ENCODE measurements at regions of chr10 and their contacts with region 1.

Region 1: GRCh38 chr10:22714479-22715289 is at the start of gene PIP4K2A:
- DNase-seq: peak; percentile 71 to 83
- ATAC-seq: peak; percentile 74 to 94 (median 86)
- H3K4me3 ChIP-seq: peak within 1 kb of the TSS; percentile 80 to 99 (median 94)
- H3K27ac ChIP-seq: peak within 1 kb of the TSS; percentile 77 to 95 (median 84)
- H3K4me1 ChIP-seq: peaks cover 0 to 37% (median 25%) of the 10 kb centered on the region in 9 donors
- H3K27me3 ChIP-seq: no peaks in the 10 kb centered on the region
- CTCF ChIP-seq: peak in 1 of 9 donors; percentile 7
- total RNA-seq, gene PIP4K2A: 8.8 to 29.1 (median 14.3) TPM

Region 2: DNA sequence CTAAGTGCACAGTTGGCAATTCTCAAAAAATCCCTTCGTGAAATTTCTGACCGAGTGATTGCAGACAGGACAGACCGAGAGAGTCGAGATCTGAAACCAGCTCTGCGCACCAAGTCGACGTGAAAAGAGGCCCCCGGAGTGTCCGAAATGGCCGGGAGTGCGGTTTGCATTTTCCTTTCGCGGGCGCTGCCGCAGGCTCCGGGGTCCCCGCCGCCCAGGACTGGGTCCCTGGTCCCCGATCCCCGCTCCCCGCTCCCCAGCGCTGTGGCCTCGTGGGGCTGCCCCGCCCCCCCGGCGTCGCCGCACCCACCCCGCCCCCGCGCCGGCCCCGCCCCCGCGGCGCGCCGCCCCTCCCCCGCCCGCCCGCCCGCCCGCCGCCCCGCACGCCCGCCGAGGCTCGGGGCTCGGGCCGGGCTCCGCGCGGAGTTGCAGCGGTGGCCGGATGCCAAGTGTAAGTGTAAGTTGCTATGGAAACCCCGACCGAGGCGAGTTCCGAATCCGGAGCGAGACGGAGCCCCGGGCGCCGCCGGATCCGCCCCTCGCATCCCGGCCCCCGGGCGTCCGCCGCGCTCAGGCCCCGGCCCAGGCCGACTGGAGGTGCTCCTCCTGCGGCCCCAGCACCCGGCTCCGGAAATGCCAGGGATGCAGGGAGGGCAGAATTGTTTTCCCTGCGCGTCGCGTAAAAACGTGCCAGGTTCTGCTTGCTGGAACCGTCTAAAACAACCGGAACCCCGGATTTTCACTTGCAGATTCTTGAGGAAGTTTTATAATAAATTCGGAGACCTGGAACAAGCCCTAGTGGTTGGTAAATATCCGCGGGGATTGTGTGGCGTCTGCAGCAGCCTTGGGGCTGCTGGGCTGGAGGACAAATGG is 389.2 kb before region 1 on chr10:
- intact Hi-C with region 1: loop called in 1 of 10 experiments (anchors 10 kb)
- DNase-seq: peak; percentile 77 to 80
- ATAC-seq: peak; percentile 32 to 66 (median 52)
- H3K4me3 ChIP-seq: peak overlapping the region; percentile 29 to 72 (median 64)
- H3K27ac ChIP-seq: peak overlapping the region in 9 of 10 donors; percentile 45 to 78 (median 59)
- H3K4me1 ChIP-seq: peaks cover 3 to 41% (median 35%) of the 10 kb centered on the region in 9 donors
- H3K27me3 ChIP-seq: peaks cover 0 to 33% (median 5%) of the 10 kb centered on the region in 7 donors
- CTCF ChIP-seq: peak in 2 of 9 donors; percentile 9 to 11

Region 3: DNA sequence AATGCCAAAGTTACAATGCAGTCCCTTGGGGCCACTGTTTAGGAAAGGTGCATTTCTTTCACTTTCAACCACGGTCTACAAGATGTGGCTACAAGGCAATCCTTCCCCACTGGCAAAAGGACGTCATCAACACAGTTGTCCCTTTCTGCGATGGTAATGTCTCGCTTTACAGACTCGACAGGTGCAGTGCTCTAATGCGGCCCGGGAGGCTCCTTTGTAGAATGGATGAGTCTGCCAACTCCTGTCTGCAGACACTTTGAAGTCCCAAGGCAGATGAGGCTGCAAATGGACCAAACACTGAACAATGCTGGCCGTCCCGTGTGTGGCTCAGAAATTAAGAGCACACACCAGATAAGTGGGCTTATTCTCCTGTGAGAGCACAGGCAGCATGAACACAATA is 134.0 kb before region 1 on chr10:
- intact Hi-C with region 1: loop called in 2 of 10 experiments (anchors 10 kb)
- DNase-seq: no peak
- ATAC-seq: no peak
- H3K4me3 ChIP-seq: no peak overlapping the region
- H3K27ac ChIP-seq: peak overlapping the region in 1 of 10 donors; percentile 39
- H3K4me1 ChIP-seq: peaks cover 0 to 4% (median 0%) of the 10 kb centered on the region in 9 donors
- H3K27me3 ChIP-seq: no peaks in the 10 kb centered on the region
- CTCF ChIP-seq: no peak

Region 4: GRCh38 chr10:22615819-22616499 is 98.7 kb before region 1 on chr10:
- intact Hi-C with region 1: loop called in 4 of 10 experiments (anchors 5 to 10 kb)
- DNase-seq: peak in 1 of 2 donors; percentile 38
- ATAC-seq: peak; percentile 25 to 60 (median 48)
- H3K4me3 ChIP-seq: peak overlapping the region in 1 of 10 donors; percentile 32
- H3K27ac ChIP-seq: peak overlapping the region in 8 of 10 donors; percentile 17 to 83 (median 59)
- H3K4me1 ChIP-seq: peaks cover 7 to 93% (median 54%) of the 10 kb centered on the region in 9 donors
- H3K27me3 ChIP-seq: no peaks in the 10 kb centered on the region
- CTCF ChIP-seq: no peak

Region 5: DNA sequence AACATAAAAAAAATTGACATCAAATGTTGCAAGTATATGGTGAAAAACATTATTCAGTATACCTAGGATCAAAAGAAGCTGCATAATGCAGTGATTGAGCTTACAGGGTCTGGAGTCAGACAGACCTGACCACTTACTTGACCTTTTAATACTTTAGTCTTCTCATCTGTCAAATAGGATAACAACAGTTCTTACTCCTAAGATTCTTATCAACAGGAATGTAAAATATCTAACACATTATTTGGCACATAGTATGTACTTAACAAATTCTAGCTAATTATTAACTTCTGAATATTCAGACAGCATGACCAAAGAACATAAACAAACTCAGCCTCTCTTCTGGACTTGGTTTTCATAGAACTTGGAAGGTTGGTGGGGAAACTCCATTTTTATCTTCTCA is 45.3 kb after region 1 on chr10:
- intact Hi-C with region 1: loop called in 1 of 10 experiments (anchors 1 kb)
- DNase-seq: no peak
- ATAC-seq: no peak
- H3K4me3 ChIP-seq: no peak overlapping the region
- H3K27ac ChIP-seq: no peak overlapping the region
- H3K4me1 ChIP-seq: peaks cover 0 to 7% (median 0%) of the 10 kb centered on the region in 9 donors
- H3K27me3 ChIP-seq: no peaks in the 10 kb centered on the region
- CTCF ChIP-seq: no peak

Region 6: DNA sequence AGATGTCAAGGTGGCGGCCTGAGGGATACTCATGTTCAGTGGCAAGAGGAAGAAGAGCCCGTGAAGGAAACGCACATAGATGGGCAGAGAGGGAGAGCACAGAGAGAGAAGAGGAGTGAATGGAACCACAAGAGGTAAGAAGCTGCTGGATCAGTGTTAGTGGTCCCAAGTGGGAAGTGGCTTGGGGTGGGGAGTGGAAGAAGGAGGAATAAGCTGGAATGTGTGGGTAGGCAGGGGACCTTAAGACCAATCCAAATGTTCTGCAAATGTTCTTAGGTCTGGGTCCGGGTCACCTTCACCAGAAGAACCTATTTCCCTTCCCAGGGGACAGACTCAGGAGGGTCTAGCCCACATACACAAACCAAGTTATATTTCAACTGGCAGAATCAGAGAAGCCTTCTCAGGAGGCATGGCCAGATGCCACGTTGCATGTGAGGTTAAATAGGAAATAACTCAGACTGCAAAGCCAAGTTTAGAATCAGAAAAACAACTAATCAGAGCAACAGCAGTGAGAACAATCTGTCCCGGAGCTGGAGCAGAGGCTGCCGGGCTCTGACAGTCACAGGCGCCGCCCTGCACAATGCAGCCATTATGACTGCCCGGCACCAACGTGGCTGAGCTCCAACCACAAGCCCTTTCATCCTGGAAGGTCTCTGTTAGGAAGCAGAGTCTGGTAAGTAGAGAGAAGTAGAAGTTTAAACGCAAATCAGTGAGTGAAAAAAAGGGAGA is 134.6 kb after region 1 on chr10:
- intact Hi-C with region 1: loop called in 2 of 10 experiments (anchors 5 to 10 kb)
- DNase-seq: peak; percentile 65 to 84
- ATAC-seq: peak; percentile 90 to 99 (median 97)
- H3K4me3 ChIP-seq: peak overlapping the region in 7 of 10 donors; percentile 6 to 34 (median 20)
- H3K27ac ChIP-seq: peak overlapping the region; percentile 52 to 85 (median 75)
- H3K4me1 ChIP-seq: peaks cover 6 to 27% (median 20%) of the 10 kb centered on the region in 9 donors
- H3K27me3 ChIP-seq: no peaks in the 10 kb centered on the region
- CTCF ChIP-seq: no peak

Region 7: GRCh38 chr10:22927661-22928403 is 213.1 kb after region 1 on chr10 and contains the start of gene ARMC3:
- intact Hi-C with region 1: no loop called
- DNase-seq: peak; percentile 35 to 76
- ATAC-seq: peak; percentile 72 to 96 (median 87)
- H3K4me3 ChIP-seq: peak within 1 kb of the TSS in 9 of 10 donors; percentile 18 to 55 (median 47)
- H3K27ac ChIP-seq: no peak within 1 kb of the TSS
- H3K4me1 ChIP-seq: peaks cover 0 to 18% (median 7%) of the 10 kb centered on the region in 9 donors
- H3K27me3 ChIP-seq: peaks cover 0 to 18% (median 0%) of the 10 kb centered on the region in 7 donors
- CTCF ChIP-seq: no peak
- total RNA-seq, gene ARMC3: not detected